Natural killer cell (primary cell): ENCODE measurements at regions of chr16 and their contacts with region 1.

Region 1: GRCh38 chr16:74984535-74985296 is at the start of gene WDR59:
- DNase-seq: peak; percentile 97 to 100
- ATAC-seq: peak; percentile 98 to 100 (median 98)
- H3K4me3 ChIP-seq: peak within 1 kb of the TSS; percentile 79
- H3K4me3 Mint-ChIP-seq: peak within 1 kb of the TSS; percentile 94
- H3K27ac ChIP-seq: peak within 1 kb of the TSS; percentile 55
- H3K27ac Mint-ChIP-seq: peak within 1 kb of the TSS; percentile 79 to 82
- H3K4me1 ChIP-seq: peaks cover 11% of the 10 kb centered on the region
- H3K4me1 Mint-ChIP-seq: peaks cover 3 to 7% of the 10 kb centered on the region in 2 donors
- H3K27me3 ChIP-seq: no peaks in the 10 kb centered on the region
- H3K27me3 Mint-ChIP-seq: no peaks in the 10 kb centered on the region
- CTCF ChIP-seq: no peak
- total RNA-seq, gene WDR59: 60.5 to 83.7 (median 73.2) TPM

Region 2: GRCh38 chr16:75148311-75149195 is 163.8 kb after region 1 on chr16 and contains the start of gene ZFP1:
- intact Hi-C with region 1: loop called (anchors 1 kb)
- DNase-seq: peak; percentile 93 to 96
- ATAC-seq: peak; percentile 90 to 94 (median 91)
- H3K4me3 ChIP-seq: peak within 1 kb of the TSS; percentile 99
- H3K4me3 Mint-ChIP-seq: peak within 1 kb of the TSS; percentile 92
- H3K27ac ChIP-seq: peak within 1 kb of the TSS; percentile 93
- H3K27ac Mint-ChIP-seq: peak within 1 kb of the TSS; percentile 81 to 88
- H3K4me1 ChIP-seq: no peaks in the 10 kb centered on the region
- H3K4me1 Mint-ChIP-seq: peaks cover 10 to 27% of the 10 kb centered on the region in 2 donors
- H3K27me3 ChIP-seq: no peaks in the 10 kb centered on the region
- H3K27me3 Mint-ChIP-seq: no peaks in the 10 kb centered on the region
- CTCF ChIP-seq: no peak
- total RNA-seq, gene ZFP1: 9.0 to 16.2 (median 14.9) TPM